ENCODE measurements at regions of chr13 and their contacts with region 1.

Region 1: GRCh38 chr13:106567474-106568298 is at the start of gene ARGLU1:
- DNase-seq: peak; percentile 96
- H3K4me3 Mint-ChIP-seq: peak within 1 kb of the TSS; percentile 99
- H3K27ac Mint-ChIP-seq: peak within 1 kb of the TSS; percentile 94
- H3K4me1 Mint-ChIP-seq: peaks cover 54% of the 10 kb centered on the region
- H3K27me3 Mint-ChIP-seq: no peaks in the 10 kb centered on the region
- total RNA-seq, gene ARGLU1: 112 to 113 TPM

Region 2: GRCh38 chr13:106536244-106537034 is 31.2 kb before region 1 on chr13:
- CTCF ChIA-PET with region 1: interaction called, 22 read pairs
- POLR2A ChIA-PET with region 1: interaction called, 48 read pairs
- DNase-seq: peak; percentile 85
- H3K4me3 Mint-ChIP-seq: peak overlapping the region; percentile 79
- H3K27ac Mint-ChIP-seq: peak overlapping the region; percentile 74
- H3K4me1 Mint-ChIP-seq: peaks cover 19% of the 10 kb centered on the region
- H3K27me3 Mint-ChIP-seq: peaks cover 25% of the 10 kb centered on the region

Region 3: GRCh38 chr13:106548064-106548696 is 19.5 kb before region 1 on chr13:
- CTCF ChIA-PET with region 1: no interaction called
- POLR2A ChIA-PET with region 1: interaction called, 23 read pairs
- DNase-seq: no peak
- H3K4me3 Mint-ChIP-seq: no peak overlapping the region
- H3K27ac Mint-ChIP-seq: no peak overlapping the region
- H3K4me1 Mint-ChIP-seq: peaks cover 17% of the 10 kb centered on the region
- H3K27me3 Mint-ChIP-seq: no peaks in the 10 kb centered on the region

Measured in activated CD4-positive, alpha-beta memory T cell treated with anti-CD3 and anti-CD28 coated beads, Interleukin-2, amount 10 ng/mL, durations not matched to agents 7 days and 5 days (primary cell).